ENCODE measurements at regions of chr22 and their contacts with region 1.

Region 1: DNA sequence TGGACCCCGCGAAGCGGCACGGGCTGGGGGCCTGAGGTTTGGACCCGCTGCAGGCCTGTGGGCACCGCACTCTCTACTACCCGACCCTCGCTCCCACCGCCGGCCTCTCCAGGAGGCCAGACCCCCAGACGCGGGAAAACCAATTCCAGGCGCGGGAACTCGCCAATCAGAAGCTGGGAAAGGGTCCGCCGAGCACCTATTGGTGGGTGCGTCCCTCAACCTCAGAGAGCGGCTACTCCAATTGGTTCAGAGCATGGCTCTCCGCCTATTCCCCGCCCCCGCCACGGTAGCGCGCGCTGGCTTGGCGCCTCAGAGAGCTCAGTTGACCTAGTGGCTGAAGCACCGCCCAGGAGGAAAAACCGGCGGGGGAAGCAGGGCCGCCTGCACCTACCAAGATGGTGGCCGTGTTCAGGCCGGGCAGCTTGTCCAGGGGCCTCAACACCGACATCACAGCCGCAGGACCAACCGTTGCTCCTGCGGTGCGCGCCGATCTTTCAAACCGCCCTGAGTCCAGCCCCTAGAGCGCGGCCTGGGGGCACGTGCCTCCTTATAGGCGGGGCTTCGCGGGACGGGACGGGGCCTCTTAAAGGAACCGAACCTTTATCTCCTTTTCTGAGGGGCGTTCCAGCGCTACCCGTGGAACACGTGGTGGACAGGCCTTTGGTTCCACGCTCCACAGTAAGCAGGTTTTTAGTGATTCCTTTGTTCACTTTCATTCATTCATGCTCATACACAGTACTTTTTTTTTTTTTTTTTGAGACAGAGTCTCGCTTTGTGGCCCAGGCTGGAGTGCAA is at the start of gene CENPM:
- DNase-seq: peak; percentile 93 to 95 (median 94)
- ATAC-seq: peak; percentile 97
- H3K4me3 ChIP-seq: peak within 1 kb of the TSS; percentile 23
- H3K4me1 ChIP-seq: peaks cover 13% of the 10 kb centered on the region
- CTCF ChIP-seq: no peak
- total RNA-seq, gene CENPM: 3.2 to 18.8 (median 7.5) TPM

Region 2: DNA sequence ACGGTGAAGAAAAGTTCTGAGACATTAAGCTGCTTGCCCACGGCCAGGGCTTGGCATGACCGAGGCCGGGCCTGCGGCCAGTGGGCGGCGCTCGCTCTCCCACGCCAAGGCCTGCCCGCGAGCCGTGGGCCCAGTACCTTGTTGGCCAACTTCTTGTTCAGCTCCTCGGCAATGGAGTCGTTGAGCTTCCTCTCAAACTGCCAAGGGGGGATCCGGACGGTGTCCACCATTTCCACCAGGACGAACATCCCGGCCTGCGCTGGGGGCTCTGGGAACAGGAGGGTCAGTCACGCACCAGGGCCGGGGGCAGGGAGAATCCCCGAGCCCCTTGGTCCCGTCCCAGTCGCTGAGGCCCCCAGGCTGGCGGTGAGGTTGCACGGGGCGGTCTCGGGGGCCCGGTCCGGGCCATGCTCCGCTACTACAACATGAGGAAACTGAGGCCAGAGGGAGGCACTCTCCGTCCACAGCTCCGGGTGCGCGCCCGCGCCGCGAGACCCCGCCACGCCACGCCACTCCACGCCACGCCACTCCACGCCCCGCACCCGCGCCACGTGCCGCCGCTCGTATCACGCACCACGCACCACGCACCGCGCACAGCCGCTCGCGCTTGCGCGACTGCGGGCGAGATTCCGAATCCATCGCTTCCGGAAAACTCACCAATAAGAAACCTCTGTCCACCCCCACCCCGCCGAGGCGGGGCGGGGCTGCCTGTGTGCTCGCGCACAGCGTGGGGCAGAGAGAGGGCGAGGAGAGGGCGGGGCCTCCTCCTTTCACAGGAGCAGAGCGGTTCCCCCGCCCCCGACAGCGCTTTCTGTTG is 402.8 kb before region 1 on chr22 and contains the start of gene POLR3H:
- intact Hi-C with region 1: no loop called
- DNase-seq: peak; percentile 98 to 100 (median 99)
- ATAC-seq: peak; percentile 99
- H3K4me3 ChIP-seq: peak within 1 kb of the TSS; percentile 60
- H3K4me1 ChIP-seq: peaks cover 21% of the 10 kb centered on the region
- CTCF ChIP-seq: peak; percentile 58
- total RNA-seq, gene POLR3H: 12.4 to 26.1 (median 15.7) TPM

Region 3: GRCh38 chr22:41697126-41697775 is 249.6 kb before region 1 on chr22:
- intact Hi-C with region 1: loop called (anchors 5 to 10 kb)
- DNase-seq: peak; percentile 91 to 100 (median 96)
- ATAC-seq: peak; percentile 96
- H3K4me3 ChIP-seq: no peak overlapping the region
- H3K4me1 ChIP-seq: peaks cover 15% of the 10 kb centered on the region
- CTCF ChIP-seq: peak; percentile 99

Region 4: DNA sequence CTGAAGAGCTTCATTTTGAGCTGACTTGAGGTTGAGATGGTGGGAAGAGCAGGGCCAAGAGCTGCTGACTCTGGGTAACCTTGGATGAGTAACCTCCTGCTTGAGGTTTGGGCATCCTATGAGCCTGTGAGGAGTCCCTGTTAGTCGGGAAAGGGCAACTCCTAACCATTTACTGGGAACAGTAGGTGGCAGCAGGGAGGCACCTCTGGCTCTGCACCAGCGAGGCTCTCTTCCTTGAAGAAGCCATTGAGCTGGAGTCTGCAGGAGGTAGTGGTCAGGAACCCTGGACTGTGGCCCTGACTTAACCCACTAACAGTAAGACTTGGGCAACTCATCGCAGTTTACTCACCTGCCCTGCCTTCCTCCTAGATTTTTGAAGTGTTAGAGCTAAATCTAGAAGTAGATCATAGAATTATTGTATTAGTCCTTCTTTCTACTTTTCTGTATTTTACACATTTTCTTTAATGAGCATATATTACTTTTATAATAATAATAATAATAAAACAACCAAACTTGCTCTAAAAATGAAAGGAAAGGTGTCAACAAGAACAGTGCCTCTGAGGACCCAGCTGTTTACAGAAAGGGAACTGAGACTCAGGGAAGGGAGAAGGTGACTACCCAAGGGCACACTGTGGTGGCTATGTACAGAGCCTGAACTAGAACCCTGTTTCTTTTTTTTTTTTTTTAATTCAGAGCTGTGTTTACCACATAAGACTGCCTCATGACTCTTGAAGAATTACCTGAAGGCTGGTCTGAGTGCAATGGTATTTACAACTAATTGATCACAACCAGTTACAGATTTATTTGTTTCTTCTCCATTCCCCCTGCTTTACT is 200.0 kb before region 1 on chr22:
- intact Hi-C with region 1: loop called in 1 of 2 experiments (anchors 10 kb)
- DNase-seq: peak; percentile 60 to 87 (median 68)
- ATAC-seq: peak; percentile 96
- H3K4me3 ChIP-seq: no peak overlapping the region
- H3K4me1 ChIP-seq: no peaks in the 10 kb centered on the region
- CTCF ChIP-seq: peak; percentile 51

Region 5: GRCh38 chr22:41876275-41876674 is 70.6 kb before region 1 on chr22:
- intact Hi-C with region 1: no loop called
- DNase-seq: no peak
- ATAC-seq: no peak
- H3K4me3 ChIP-seq: no peak overlapping the region
- H3K4me1 ChIP-seq: no peaks in the 10 kb centered on the region
- CTCF ChIP-seq: no peak

Region 6: DNA sequence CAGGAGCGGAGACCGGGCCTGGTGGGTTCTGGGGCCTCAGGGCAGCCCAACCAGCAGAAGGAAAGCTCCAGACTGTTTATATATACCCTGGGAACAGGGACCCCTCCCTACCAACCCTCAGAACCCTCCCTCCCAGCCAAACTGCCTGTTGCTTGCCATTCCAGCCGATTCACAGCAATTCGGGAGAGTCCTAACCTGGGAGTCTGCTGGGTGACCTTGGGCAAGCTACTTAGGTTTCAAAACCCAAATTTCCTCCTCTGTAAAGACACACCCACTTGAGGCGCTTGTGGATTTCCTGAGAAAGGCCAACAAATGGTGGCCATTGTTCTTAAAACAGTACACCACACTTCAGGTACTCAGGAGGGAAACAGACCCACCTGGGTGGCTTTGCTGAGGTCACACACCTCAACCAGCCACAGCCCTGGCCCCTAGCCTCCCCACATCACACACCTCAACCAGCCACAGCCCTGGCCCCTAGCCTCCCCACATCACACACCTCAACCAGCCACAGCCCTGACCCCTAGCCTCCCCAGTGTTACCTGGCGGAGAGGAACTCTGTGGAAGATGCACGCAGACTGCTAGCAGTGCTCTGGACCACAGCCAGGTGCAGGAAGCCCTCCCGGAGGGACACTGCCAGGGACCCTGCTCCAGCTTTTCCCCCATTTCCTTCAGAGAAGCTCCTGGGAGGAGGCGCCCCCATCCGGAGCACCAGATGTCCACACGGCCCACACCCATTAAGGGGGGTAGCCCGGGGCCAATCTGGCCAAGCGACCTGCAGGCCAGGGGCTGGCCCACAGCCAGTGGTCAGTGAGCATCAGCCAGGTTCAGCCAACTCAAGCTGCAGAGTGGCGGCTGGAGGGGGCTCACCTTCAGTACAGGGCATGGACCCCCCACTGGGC is 38.2 kb before region 1 on chr22:
- intact Hi-C with region 1: no loop called
- DNase-seq: peak in 1 of 3 donors; percentile 57
- ATAC-seq: peak; percentile 18
- H3K4me3 ChIP-seq: no peak overlapping the region
- H3K4me1 ChIP-seq: peaks cover 21% of the 10 kb centered on the region
- CTCF ChIP-seq: no peak

Region 7: DNA sequence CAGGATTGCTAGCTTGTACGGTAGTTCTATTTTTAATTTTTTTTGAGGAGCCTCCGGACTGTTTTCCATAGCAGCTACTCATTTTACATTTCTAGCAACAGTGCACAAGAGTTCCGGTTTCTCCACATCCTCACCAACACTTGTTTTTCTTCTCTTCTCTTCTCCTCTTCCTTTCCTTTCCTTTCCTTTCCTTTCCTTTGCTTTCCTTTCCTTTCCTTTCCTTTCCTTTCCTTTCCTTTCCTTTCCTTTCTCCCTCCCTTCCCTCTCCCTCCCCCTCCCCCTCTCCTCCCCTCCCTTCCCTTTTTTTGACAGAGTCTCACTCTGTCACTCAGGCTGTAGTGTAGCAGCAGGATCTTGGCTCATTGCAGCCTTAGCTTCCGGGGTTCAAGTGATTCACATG is 61.1 kb after region 1 on chr22:
- intact Hi-C with region 1: no loop called
- DNase-seq: no peak
- ATAC-seq: no peak
- H3K4me3 ChIP-seq: no peak overlapping the region
- H3K4me1 ChIP-seq: no peaks in the 10 kb centered on the region
- CTCF ChIP-seq: no peak

Measured in mucosa of descending colon (tissue), 3 donors.